ENCODE measurements at regions of chr5 and their contacts with region 1.

Region 1: GRCh38 chr5:118791926-118792734 is 196.2 kb downstream of the DTWD2 start:
- DNase-seq: peak; percentile 78
- H3K4me3 ChIP-seq: no peak overlapping the region
- H3K27ac ChIP-seq: no peak overlapping the region
- H3K4me1 ChIP-seq: no peaks in the 10 kb centered on the region
- H3K27me3 ChIP-seq: no peaks in the 10 kb centered on the region
- CTCF ChIP-seq: peak; percentile 84

Region 2: DNA sequence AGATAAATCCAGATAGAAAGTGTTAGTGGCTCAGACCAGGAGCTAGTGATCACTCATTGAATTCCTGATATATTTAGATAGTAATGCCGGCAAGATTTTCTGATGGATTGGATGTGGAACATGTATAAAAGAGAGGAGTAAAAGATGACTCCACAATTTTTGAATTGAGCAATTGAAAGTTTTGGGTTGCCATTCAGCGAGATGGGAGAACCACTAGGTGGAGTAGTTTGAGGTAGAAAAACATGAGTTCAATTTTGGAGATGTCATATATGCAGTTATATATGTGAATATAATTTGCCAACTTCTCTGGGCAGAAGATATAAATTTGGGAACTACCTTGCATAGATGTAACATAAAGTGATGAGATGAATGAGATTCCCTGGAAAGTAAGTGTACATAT is 1715.0 kb before region 1 on chr5:
- CTCF ChIA-PET with region 1: no interaction called
- POLR2A ChIA-PET with region 1: no interaction called
- intact Hi-C with region 1: loop called (anchors 5 kb)
- DNase-seq: no peak
- H3K4me3 ChIP-seq: no peak overlapping the region
- H3K27ac ChIP-seq: no peak overlapping the region
- H3K4me1 ChIP-seq: no peaks in the 10 kb centered on the region
- H3K27me3 ChIP-seq: no peaks in the 10 kb centered on the region
- CTCF ChIP-seq: peak; percentile 64

Region 3: DNA sequence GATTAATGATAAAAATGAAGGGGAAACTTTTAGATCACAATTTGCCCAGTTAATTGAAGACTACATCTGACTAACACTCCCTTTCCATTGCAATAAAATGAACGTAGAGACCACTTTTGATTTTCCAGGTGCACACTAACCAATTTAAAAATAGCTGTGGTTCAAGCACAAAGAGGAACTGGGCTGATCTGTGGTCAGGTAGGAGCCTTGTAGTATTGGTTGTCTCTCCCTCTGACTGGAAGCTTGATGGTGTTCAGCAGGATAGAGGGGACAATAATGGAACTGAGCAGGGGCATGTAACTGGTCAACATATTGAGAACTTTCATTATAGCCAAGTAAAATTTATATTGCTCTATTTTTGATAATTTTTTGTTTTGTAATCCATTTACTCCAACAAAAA is 1330.7 kb before region 1 on chr5:
- CTCF ChIA-PET with region 1: no interaction called
- POLR2A ChIA-PET with region 1: no interaction called
- intact Hi-C with region 1: loop called (anchors 5 kb)
- DNase-seq: no peak
- H3K4me3 ChIP-seq: no peak overlapping the region
- H3K27ac ChIP-seq: no peak overlapping the region
- H3K4me1 ChIP-seq: no peaks in the 10 kb centered on the region
- H3K27me3 ChIP-seq: no peaks in the 10 kb centered on the region
- CTCF ChIP-seq: no peak

Region 4: GRCh38 chr5:118956727-118957126 is 164.6 kb after region 1 on chr5:
- CTCF ChIA-PET with region 1: no interaction called
- POLR2A ChIA-PET with region 1: no interaction called
- intact Hi-C with region 1: loop called (anchors 5 kb)
- DNase-seq: peak; percentile 51
- H3K4me3 ChIP-seq: no peak overlapping the region
- H3K27ac ChIP-seq: no peak overlapping the region
- H3K4me1 ChIP-seq: no peaks in the 10 kb centered on the region
- H3K27me3 ChIP-seq: no peaks in the 10 kb centered on the region
- CTCF ChIP-seq: peak; percentile 66

Measured in A673 (cell line).